ENCODE measurements at regions of chr20 and their contacts with region 1.

Region 1: DNA sequence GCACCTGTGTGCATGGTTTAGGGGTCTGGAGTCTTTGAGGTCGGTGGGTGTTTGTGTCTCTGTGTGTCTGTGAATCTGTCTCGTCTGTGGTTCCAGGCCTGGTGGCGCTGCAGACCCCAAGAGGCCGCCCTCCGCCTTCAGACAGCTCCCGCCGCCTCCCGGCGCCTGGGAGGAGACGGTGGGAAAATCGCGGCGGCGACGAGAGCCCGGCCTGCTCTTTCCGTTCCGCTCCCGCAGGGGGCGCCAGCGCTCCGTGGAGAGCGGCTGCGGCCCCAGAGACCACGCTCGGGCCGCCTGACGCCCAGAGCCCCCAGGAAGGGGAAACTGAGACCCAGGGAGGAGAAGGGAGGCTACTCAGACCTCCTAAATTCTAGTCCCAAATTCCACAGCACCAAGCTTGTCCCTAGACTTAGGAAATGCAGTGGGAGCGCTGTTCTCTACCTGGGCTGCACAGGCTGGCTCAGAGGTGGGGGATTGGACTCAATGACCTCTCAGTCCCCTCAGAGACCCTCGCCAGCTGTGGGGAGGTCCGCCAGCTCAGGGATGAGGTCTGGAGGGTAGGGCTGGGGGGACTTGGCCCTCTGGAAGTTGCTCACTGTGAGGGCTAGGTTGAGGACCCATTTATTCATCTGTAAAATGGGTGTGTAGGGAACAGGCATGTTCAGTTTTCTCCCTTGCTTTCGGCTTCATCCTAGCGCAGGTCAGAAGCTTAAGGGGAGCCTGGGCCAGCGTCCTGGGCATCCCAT is 36.9 kb upstream of the BLCAP start:
- DNase-seq: peak; percentile 19 to 46
- ATAC-seq: peak; percentile 80 to 91
- H3K4me3 ChIP-seq: no peak overlapping the region
- H3K27ac ChIP-seq: 0 out of 6 replicates have a peak overlapping the region, but pooled peaks of 1 of the 2 experiments have one; percentile 37
- H3K4me1 ChIP-seq: peaks cover 5% of the 10 kb centered on the region; the same call in 1 of the 3 replicates
- CTCF ChIP-seq: peak; percentile 96
- EP300 ChIP-seq: no peak
- POLR2A ChIP-seq: no peak
- RAD21 ChIP-seq: peak; percentile 90 to 97

Region 2: GRCh38 chr20:37468886-37469285 is 95.7 kb before region 1 on chr20:
- CTCF ChIA-PET with region 1: no interaction called
- POLR2A ChIA-PET with region 1: no interaction called
- DNase-seq: no peak
- ATAC-seq: no peak
- H3K4me3 ChIP-seq: no peak overlapping the region
- H3K27ac ChIP-seq: no peak overlapping the region
- H3K4me1 ChIP-seq: no peaks in the 10 kb centered on the region
- CTCF ChIP-seq: no peak
- EP300 ChIP-seq: no peak
- POLR2A ChIP-seq: no peak
- RAD21 ChIP-seq: no peak

Region 3: DNA sequence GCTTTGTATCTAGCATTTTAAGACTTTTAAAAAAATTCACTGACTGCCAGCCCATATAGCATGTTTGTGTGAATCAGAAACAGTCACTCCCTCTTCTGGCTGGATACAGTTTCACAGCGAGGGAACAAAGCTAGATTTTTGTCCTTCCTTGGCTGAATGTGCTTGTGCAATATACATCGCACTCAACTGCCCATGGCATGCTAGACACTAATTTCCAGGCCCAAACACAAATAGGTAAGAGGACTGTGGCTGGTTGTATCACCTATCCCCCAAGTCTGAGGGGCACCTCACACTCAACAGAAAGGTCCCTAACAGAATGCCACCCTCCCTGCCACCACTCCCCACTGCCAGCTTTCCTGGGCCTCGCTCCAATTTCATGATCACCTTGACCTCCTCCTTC is 20.7 kb before region 1 on chr20:
- CTCF ChIA-PET with region 1: interaction called, 17 read pairs
- POLR2A ChIA-PET with region 1: no interaction called
- DNase-seq: peak; percentile 42 to 51
- ATAC-seq: peak; percentile 87
- H3K4me3 ChIP-seq: no peak overlapping the region
- H3K27ac ChIP-seq: no peak overlapping the region
- H3K4me1 ChIP-seq: peaks cover 6% of the 10 kb centered on the region; the same call in 1 of the 3 replicates
- CTCF ChIP-seq: peak; percentile 32; the same call in 2 of the 3 replicates
- EP300 ChIP-seq: no peak
- POLR2A ChIP-seq: no peak
- RAD21 ChIP-seq: 0 out of 5 replicates have a peak, but pooled peaks of 1 of the 2 experiments have one; percentile 26

Region 4: GRCh38 chr20:37584238-37584807 is 19.8 kb after region 1 on chr20:
- CTCF ChIA-PET with region 1: interaction called, 21 read pairs
- POLR2A ChIA-PET with region 1: no interaction called
- DNase-seq: no peak
- ATAC-seq: no peak
- H3K4me3 ChIP-seq: no peak overlapping the region
- H3K27ac ChIP-seq: no peak overlapping the region
- H3K4me1 ChIP-seq: no peaks in the 10 kb centered on the region
- CTCF ChIP-seq: no peak
- EP300 ChIP-seq: no peak
- POLR2A ChIP-seq: no peak
- RAD21 ChIP-seq: no peak

Region 5: DNA sequence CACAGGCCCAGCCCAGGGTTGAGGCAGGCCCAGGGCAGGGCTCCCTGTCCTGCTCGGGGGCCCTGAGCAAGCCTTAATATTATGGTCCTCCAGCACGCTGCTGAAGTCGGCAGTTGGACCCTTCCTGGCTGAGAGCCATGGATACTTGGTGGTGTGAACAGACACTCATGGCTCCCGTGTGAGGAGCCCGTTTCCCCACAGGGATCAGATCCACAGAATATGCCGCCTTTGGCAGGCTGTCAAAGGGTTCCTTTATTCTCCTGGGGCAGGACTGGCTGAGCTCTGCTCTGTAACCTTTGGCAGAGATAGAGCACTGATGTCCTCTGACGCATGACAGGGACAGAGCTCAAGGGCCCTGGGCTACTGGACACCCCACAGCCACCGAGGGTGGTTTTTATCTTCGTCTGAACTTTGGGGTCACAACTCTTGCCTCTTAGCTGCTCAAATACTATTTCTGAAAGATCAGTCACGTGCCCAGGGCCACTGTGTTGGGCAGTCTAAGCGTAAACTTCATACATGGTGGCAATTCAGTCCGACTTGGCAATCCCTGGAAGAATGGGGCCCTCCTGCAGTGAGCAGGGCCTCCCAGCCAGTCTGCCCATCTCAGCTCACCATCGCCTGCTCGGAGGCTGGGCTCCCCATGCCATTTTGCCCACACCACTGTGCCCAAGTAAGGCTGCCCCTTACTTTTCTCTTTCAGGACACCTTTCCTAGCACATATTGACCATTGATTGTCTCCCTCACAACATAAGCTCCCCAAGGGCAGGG is 419.6 kb after region 1 on chr20:
- CTCF ChIA-PET with region 1: interaction called, 11 read pairs
- POLR2A ChIA-PET with region 1: no interaction called
- DNase-seq: no peak
- ATAC-seq: peak in 1 of 2 experiments; percentile 26; a peak in 1 of 6 replicates
- H3K4me3 ChIP-seq: no peak overlapping the region
- H3K27ac ChIP-seq: no peak overlapping the region
- H3K4me1 ChIP-seq: peaks cover 23% of the 10 kb centered on the region
- CTCF ChIP-seq: no peak
- EP300 ChIP-seq: no peak
- POLR2A ChIP-seq: no peak
- RAD21 ChIP-seq: no peak

Region 6: DNA sequence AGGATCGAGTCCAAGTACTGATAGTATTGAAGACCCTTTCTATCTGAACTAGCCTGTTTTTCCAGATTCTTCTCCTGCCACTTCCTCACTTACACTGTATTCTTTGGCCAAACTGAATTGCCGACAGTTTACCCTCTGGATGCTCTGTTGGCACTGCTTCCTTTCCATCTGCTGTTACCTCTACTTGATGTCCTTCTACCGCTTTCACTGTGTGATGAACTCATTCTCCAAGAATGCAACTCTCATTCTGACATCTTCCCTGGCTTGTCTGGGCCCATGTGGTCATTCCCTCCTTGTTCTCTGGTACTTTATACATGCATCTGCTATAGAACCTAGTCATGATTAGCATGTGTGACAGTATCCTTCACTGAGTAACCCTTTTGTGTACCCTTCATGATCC is 485.2 kb after region 1 on chr20:
- CTCF ChIA-PET with region 1: interaction called, 15 read pairs
- POLR2A ChIA-PET with region 1: no interaction called
- DNase-seq: no peak
- ATAC-seq: peak in 1 of 2 experiments; percentile 66; a peak in 4 of 6 replicates
- H3K4me3 ChIP-seq: no peak overlapping the region
- H3K27ac ChIP-seq: peak overlapping the region in 1 of 2 experiments; percentile 41; a peak in 2 of 6 replicates
- H3K4me1 ChIP-seq: peaks cover 18% of the 10 kb centered on the region
- CTCF ChIP-seq: no peak
- EP300 ChIP-seq: no peak
- POLR2A ChIP-seq: no peak
- RAD21 ChIP-seq: no peak

Region 7: DNA sequence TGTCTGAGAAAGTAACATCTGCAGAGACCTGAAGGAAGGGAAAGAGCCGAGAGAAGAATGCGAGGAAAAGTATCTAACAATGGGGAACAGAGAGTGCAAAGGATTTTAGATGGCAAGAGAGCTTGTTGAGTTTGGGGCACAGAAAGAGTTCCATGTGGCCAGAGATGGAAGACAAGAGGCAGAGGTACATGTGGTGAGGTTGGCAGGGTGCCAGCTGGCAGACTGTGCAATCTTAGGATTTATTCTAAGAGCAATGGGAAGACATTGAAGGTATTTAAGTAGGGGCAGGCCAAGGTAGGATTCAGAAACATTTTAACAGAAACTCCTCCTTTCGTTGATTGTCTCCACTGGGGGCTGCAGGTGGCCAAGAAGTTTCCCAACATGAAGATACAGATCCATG is 761.3 kb after region 1 on chr20:
- CTCF ChIA-PET with region 1: interaction called, 11 read pairs
- POLR2A ChIA-PET with region 1: no interaction called
- DNase-seq: no peak
- ATAC-seq: no peak
- H3K4me3 ChIP-seq: no peak overlapping the region
- H3K27ac ChIP-seq: no peak overlapping the region
- H3K4me1 ChIP-seq: no peaks in the 10 kb centered on the region
- CTCF ChIP-seq: no peak
- EP300 ChIP-seq: no peak
- POLR2A ChIP-seq: no peak
- RAD21 ChIP-seq: no peak

Measured in A549 (cell line).